ENCODE measurements at regions of chr11 and their contacts with region 1.

Region 1: DNA sequence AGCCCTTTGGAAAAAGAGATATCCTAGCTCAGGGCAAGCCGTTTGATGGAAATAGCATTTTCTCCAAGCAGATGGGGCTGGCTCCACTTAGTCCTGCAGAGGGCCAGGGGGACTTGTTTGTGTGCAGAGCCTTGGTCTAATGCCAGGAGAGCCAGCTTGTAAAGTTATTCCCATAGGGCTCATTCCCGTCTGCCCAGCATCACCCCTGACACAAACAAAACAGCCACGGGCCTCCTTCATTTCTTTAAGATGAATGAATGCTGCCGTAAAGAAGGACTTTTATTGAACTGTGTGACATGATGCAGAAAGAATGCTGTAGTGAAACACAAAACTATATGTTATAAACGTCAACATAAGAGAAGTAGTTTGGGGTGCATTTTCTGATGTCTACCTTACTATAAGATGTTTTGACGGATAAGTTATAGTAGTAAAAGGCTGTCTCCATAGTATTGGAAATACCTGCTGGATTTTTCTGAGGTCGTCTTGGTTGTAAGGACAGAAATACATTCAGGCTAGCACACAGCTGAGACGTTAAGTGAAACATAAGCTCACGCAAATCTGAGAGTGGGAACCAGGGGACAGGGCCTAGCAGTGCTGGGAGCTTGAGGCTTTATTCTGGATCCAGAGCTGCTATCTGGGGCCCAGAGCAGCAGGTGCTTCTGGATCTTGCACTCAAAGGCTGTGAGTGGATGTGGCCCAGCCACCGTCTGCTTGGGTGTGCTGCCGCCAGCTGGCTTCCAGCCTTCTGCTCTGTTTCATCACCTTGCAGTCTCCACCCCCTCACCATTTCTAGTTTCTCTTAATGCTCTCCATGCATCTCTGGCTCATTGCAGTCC is 53.3 kb downstream of the NCAM1 start:
- DNase-seq: peak in 9 of 10 donors; percentile 30 to 95 (median 61)

Region 2: GRCh38 chr11:112977755-112978154 is 36.7 kb before region 1 on chr11:
- intact Hi-C with region 1: loop called (anchors 5 kb)
- DNase-seq: peak in 2 of 10 donors; percentile 27 to 84